Ovary (tissue), 10 donors: ENCODE measurements at regions of chr3 and their contacts with region 1.

Region 1: DNA sequence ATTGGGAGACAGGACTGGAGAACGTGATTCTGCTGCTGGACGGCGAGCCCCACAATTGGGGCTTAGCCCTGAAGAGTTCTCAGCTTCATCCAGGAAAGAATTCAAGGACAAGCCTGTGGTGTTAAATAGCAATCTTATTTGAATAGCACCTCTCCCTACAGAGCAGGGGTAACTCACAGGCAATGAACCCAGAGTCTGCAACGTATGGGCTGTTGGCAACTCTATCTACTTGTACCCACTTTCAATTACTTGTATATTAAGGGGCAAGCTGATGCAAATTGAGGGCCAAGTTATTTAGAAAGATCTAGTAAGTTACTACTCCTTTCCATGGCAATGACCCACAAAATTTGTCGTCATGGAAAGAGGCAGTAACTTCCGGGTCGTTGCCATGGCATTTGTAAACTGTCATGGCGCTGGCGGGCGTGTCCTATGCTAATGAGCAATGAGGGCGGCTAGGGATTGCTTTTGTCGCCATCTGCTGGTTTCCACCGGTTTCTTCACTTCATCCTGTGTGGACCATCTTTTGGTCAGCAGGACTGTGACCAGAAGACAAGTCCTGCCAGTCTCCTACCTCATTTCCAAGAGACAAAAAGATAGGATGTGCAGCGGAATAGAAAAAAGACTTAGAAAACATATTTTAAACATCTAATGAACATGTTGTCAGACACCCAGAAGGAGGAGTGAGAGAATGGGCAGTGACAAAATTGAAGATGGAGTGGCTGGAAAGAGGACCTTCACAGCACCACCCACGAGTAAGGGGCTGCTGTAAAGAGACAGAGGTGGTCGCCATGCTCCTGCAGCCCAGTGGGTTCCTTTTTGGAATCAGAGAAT is 45.8 kb upstream of the SH3BP5 start:
- DNase-seq: peak; percentile 93 to 98 (median 96)
- H3K4me3 ChIP-seq: no peak overlapping the region
- H3K27ac ChIP-seq: peak overlapping the region; percentile 2 to 66
- H3K4me1 ChIP-seq: peaks cover 2% of the 10 kb centered on the region
- H3K27me3 ChIP-seq: no peaks in the 10 kb centered on the region
- CTCF ChIP-seq: peak; percentile 90 to 93 (median 92)
- EP300 ChIP-seq: peak; percentile 77
- POLR2A ChIP-seq: no peak

Region 2: GRCh38 chr3:15268033-15268631 is 110.0 kb before region 1 on chr3:
- intact Hi-C with region 1: loop called (anchors 2 to 5 kb)
- DNase-seq: peak; percentile 82 to 91 (median 90)
- H3K4me3 ChIP-seq: no peak overlapping the region
- H3K27ac ChIP-seq: peak overlapping the region; percentile 25 to 53
- H3K4me1 ChIP-seq: peaks cover 15% of the 10 kb centered on the region
- H3K27me3 ChIP-seq: no peaks in the 10 kb centered on the region
- CTCF ChIP-seq: peak; percentile 84 to 95 (median 93)
- EP300 ChIP-seq: no peak
- POLR2A ChIP-seq: no peak